ENCODE measurements at regions of chr3 and their contacts with region 1.

Region 1: DNA sequence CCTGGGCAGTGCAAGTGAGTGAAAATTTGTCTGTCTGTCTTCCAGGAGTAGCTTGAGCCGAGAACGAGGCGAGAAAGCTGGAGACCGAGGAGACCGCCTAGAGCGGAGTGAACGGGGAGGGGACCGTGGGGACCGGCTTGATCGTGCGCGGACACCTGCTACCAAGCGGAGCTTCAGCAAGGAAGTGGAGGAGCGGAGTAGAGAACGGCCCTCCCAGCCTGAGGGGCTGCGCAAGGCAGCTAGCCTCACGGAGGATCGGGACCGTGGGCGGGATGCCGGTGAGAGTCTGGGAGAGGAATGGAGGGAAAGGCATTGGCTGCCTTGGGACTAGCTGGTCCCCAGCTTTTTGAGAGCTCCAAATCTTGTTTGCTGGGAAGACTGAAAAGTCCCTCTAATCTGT is 10.2 kb upstream of the FAM131A start:
- DNase-seq: no peak
- H3K4me3 Mint-ChIP-seq: no peak overlapping the region
- H3K27ac Mint-ChIP-seq: no peak overlapping the region
- H3K4me1 Mint-ChIP-seq: peaks cover 2% of the 10 kb centered on the region
- H3K27me3 Mint-ChIP-seq: no peaks in the 10 kb centered on the region

Region 2: GRCh38 chr3:184314700-184315542 is 12.2 kb before region 1 on chr3:
- CTCF ChIA-PET with region 1: interaction called, 10 read pairs
- POLR2A ChIA-PET with region 1: no interaction called
- DNase-seq: peak; percentile 63
- H3K4me3 Mint-ChIP-seq: peak overlapping the region; percentile 83
- H3K27ac Mint-ChIP-seq: peak overlapping the region; percentile 92
- H3K4me1 Mint-ChIP-seq: peaks cover 35% of the 10 kb centered on the region
- H3K27me3 Mint-ChIP-seq: no peaks in the 10 kb centered on the region